Cardiac septum (tissue), 1 donor: ENCODE measurements at regions of chr16 and their contacts with region 1.

Region 1: DNA sequence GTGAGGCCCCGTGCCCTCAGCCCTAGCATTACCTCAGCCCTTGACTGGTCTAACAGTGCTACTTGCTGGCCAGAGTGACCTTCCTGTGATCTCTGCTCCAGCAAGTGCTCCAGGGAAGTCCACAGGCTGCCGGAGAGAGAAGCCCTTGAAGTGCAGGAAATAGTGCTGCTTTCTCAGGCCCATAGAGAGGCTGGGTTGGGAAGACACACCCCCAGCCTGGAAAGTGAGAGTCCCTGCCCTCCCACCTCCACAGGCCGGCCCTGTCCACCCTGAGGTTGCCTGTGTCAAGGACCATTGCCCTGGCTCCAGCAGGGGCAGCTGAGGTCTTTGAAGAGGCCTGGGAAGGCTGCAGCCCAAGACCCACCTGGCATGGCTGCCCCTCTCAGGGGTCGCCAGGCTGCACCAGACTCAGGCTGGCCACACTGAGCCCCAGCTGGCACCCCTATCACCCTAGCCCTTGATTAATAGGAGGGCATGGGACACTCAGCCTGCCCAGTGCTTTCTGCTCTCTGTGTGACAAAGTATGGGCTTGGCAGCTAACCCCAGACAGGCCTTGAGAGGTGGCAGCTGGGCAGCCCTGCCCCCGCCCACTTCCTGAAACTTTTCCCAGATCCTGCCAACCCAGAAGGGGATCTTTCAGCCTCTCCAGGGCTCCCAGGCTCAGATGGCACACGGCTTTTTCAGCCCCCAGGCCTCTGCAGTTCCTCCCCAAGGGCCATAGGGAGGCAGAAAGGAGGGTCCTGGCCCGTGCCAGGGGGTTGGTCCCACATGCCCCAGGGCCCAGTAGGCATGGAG is 21.7 kb downstream of the ATP6V0D1 start:
- DNase-seq: no peak

Region 2: GRCh38 chr16:67236563-67237395 is 222.5 kb before region 1 on chr16:
- intact Hi-C with region 1: no loop called
- DNase-seq: no peak

Region 3: GRCh38 chr16:67301080-67301782 is 158.0 kb before region 1 on chr16:
- intact Hi-C with region 1: no loop called
- DNase-seq: no peak

Region 4: GRCh38 chr16:67372664-67373063 is 86.6 kb before region 1 on chr16:
- intact Hi-C with region 1: loop called (anchors 10 kb)
- DNase-seq: no peak

Region 5: DNA sequence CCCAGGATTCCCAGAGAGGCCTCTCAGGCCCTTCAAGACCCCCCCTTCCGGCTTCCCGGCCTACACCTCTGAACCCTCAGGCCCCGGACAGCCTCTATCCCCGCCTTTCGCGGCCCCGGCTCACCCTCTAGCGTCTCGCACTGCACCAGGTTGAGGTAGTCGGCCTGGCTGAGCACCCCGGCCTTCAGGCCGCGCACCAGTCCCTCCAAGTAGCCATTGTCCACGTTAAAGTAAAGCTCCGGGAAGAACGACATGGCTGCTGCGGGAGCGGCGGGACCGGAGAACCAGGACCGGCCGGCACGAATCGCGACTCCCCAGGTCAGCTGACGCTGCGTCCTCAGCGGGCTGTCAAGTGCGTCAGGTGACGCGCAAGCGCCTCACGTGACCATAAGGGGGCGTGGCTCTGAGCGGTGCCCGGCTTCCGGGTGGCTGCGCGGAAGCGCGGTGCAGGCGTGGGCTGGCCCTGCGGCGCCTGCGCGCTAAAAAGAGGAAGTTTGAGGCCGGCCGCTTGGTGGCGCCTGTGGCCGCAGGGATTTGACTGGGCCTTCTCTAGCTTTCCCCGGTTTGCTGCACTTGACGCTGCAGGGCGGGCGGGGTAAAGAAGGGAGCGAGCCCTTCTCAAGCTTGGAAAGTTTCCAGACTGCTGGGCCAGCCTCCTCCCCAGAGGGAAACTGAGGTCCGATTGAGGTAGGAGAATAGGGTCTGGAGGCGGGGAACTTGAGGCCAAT is 21.7 kb after region 1 on chr16 and contains the start of gene ATP6V0D1:
- intact Hi-C with region 1: loop called (anchors 1 kb)
- DNase-seq: peak; percentile 99
- total RNA-seq, gene ATP6V0D1: 58.8 TPM

Region 6: GRCh38 chr16:67546761-67547422 is 87.6 kb after region 1 on chr16:
- intact Hi-C with region 1: no loop called
- DNase-seq: peak; percentile 87